ENCODE measurements at regions of chr1 and their contacts with region 1.

Region 1: DNA sequence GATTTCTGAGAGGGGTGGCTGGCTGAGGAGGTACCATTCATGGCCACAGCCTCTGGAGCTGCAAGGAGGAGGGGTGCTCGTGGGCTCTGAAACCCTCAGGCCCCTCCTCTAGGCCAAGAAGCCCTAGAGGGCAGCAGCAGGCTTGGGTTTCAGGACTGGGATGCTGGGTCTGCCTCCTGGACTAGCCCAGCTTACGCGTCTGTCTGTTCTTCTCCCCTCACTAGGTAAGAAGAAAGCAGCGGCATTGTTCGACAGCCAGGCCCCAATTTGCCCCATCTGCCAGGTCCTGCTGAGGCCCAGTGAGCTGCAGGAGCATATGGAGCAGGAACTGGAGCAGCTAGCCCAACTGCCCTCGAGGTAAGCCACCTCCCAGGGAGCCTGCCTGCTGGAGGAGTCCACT is 60.3 kb downstream of the TMEM53 start:
- DNase-seq: no peak
- H3K4me3 ChIP-seq: no peak overlapping the region
- H3K27ac ChIP-seq: no peak overlapping the region
- H3K4me1 ChIP-seq: no peaks in the 10 kb centered on the region
- H3K27me3 ChIP-seq: no peaks in the 10 kb centered on the region
- CTCF ChIP-seq: no peak
- POLR2A ChIP-seq: no peak

Region 2: DNA sequence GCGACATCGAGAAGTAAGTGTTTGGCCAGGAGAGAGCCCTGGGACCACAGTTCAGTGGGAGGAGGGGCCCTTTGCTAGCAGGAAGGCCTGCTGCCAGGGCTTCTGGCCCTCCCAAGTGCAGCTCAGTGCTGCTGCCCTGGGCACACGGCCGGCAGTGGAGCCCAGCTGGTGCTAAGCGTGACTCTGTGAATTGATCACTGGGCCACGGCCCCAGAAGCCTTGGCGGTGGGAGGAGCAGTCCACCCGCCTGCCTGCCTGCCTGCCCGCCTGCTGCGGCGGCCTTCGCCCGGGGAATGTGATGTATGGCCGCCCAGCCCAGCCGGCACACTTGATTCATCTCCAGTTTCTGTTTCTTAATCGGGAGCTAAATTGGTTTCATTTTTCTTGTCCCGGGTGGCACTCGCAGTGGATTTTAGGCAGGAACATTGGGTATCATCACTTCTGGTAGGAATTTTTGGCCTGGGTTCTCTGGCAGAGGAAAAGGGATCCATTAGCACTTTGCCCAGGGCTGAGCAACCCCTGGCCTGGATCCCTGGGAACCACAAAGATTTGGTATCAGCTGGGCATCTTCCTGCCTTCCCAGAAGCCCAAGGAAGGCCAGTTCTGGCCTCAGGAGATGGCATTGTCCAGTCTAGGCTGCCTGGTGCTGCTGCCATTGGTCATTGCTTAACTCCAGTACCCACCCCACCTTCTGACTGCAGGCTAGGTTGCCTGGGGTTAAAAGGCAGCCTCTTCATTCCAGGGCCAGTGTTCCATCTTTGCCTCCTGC is 31.7 kb after region 1 on chr1:
- intact Hi-C with region 1: loop called (anchors 2 kb)
- DNase-seq: peak in 1 of 2 donors; percentile 40
- H3K4me3 ChIP-seq: no peak overlapping the region
- H3K27ac ChIP-seq: peak overlapping the region; percentile 72 to 73
- H3K4me1 ChIP-seq: peaks cover 0 to 12% of the 10 kb centered on the region in 2 donors
- H3K27me3 ChIP-seq: no peaks in the 10 kb centered on the region
- CTCF ChIP-seq: no peak
- POLR2A ChIP-seq: no peak

Region 3: GRCh38 chr1:44672254-44672955 is 58.5 kb after region 1 on chr1:
- intact Hi-C with region 1: no loop called
- DNase-seq: no peak
- H3K4me3 ChIP-seq: no peak overlapping the region
- H3K27ac ChIP-seq: peak overlapping the region; percentile 96 to 97
- H3K4me1 ChIP-seq: no peaks in the 10 kb centered on the region
- H3K27me3 ChIP-seq: no peaks in the 10 kb centered on the region
- CTCF ChIP-seq: no peak
- POLR2A ChIP-seq: no peak

Measured in uterus (tissue), 4 donors.